Lower leg skin (tissue), 4 donors: ENCODE measurements at regions of chr5 and their contacts with region 1.

Region 1: GRCh38 chr5:55936100-55936693 is 58.6 kb downstream of the IL6ST start:
- DNase-seq: peak; percentile 70 to 93
- H3K4me3 ChIP-seq: no peak overlapping the region
- CTCF ChIP-seq: peak in 1 of 3 donors; percentile 45
- POLR2A ChIP-seq: no peak

Region 2: DNA sequence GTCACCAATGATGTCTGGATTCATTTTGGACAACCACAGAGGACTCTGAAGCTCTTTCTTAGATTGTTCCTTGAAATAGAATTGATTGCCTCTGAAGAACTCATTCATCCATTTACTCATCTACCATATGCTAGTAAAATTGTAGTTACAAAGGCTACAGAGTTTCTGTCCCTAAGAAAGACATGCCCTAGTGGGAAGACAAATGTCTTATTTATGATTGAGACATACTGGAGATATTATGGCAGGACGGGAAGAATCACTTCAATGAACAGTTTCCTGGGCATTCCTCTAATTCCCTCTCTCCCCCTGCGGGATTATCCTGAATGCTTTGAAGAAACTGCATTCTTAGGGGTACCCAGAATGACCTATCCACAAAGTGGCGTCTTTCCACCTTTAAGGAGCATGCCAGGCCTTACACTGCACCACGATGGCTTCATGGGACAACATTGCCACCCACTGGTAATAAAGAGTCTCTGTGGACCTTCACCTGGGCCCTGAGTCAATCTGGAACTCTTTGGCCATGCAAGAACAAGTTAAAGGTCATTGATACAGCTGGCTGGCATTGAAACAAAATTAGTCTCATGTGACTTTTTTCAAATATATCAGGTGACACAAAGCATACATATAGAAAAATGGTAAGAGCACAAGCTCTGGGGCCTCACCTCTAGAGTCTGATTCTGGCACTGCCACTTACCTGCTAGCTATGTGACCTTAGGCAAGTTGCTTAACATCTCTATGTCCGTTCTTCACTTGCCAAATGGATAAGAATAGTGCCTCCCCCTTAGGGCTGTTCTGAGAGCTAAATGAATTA is 264.9 kb after region 1 on chr5:
- intact Hi-C with region 1: loop called (anchors 10 kb)
- DNase-seq: peak in 1 of 2 donors; percentile 44
- H3K4me3 ChIP-seq: no peak overlapping the region
- CTCF ChIP-seq: peak in 1 of 3 donors; percentile 38
- POLR2A ChIP-seq: no peak